Activated B cell treated with CpG ODN at 0.5 μM for 24 hours (primary cell): ENCODE measurements at regions of chr19 and their contacts with region 1.

Region 1: GRCh38 chr19:4791170-4792018 is at the start of gene FEM1A:
- DNase-seq: peak; percentile 97
- ATAC-seq: peak; percentile 95
- H3K4me3 Mint-ChIP-seq: peak within 1 kb of the TSS; percentile 79
- H3K27ac Mint-ChIP-seq: peak within 1 kb of the TSS; percentile 82
- H3K4me1 Mint-ChIP-seq: peaks cover 33% of the 10 kb centered on the region
- H3K27me3 Mint-ChIP-seq: peaks cover 2% of the 10 kb centered on the region
- CTCF ChIP-seq: peak; percentile 84
- total RNA-seq, gene FEM1A: 16.7 and 17.9 TPM in 2 replicates

Region 2: GRCh38 chr19:4400135-4400936 is 391.1 kb before region 1 on chr19 and contains the start of gene SH3GL1:
- CTCF ChIA-PET with region 1: no interaction called
- POLR2A ChIA-PET with region 1: no interaction called
- intact Hi-C with region 1: loop called (anchors 1 kb)
- DNase-seq: peak; percentile 95
- ATAC-seq: peak; percentile 65
- H3K4me3 Mint-ChIP-seq: peak within 1 kb of the TSS; percentile 88
- H3K27ac Mint-ChIP-seq: peak within 1 kb of the TSS; percentile 91
- H3K4me1 Mint-ChIP-seq: peaks cover 59% of the 10 kb centered on the region
- H3K27me3 Mint-ChIP-seq: no peaks in the 10 kb centered on the region
- CTCF ChIP-seq: peak; percentile 58
- total RNA-seq, gene SH3GL1: 33.8 and 43.7 TPM in 2 replicates

Region 3: GRCh38 chr19:4638828-4639530 is 152.4 kb before region 1 on chr19 and contains the start of gene TNFAIP8L1:
- CTCF ChIA-PET with region 1: no interaction called
- POLR2A ChIA-PET with region 1: no interaction called
- intact Hi-C with region 1: loop called (anchors 1 kb)
- DNase-seq: peak; percentile 99
- ATAC-seq: peak; percentile 92
- H3K4me3 Mint-ChIP-seq: peak within 1 kb of the TSS; percentile 99
- H3K27ac Mint-ChIP-seq: peak within 1 kb of the TSS; percentile 97
- H3K4me1 Mint-ChIP-seq: peaks cover 44% of the 10 kb centered on the region
- H3K27me3 Mint-ChIP-seq: no peaks in the 10 kb centered on the region
- CTCF ChIP-seq: no peak
- total RNA-seq, gene TNFAIP8L1: 13.2 and 15.5 TPM in 2 replicates

Region 4: DNA sequence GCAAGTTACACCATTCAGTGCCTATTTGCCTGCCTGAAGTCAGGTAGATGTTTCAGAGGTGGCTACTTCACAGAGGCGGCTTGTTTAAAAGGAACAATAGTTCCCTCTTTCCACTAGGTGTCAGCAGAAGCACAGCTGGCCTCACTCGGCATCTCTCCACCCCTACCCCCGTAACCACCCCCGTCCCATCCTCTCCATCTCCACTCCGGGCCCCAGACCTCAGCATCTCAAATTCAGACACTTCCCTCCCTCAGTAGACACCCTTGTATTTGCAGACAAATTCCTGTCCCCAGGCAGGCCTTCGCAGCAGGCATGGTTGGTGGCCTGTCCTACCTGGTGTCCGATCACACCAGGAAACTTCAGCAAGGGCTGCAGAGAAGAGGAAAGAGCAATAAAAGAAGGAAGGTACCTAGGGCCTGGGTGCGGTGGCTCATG is 58.7 kb before region 1 on chr19:
- CTCF ChIA-PET with region 1: interaction called, 50 read pairs
- POLR2A ChIA-PET with region 1: interaction called, 27 read pairs
- intact Hi-C with region 1: loop called (anchors 1 kb)
- DNase-seq: peak; percentile 29
- ATAC-seq: peak; percentile 97
- H3K4me3 Mint-ChIP-seq: peak overlapping the region; percentile 36
- H3K27ac Mint-ChIP-seq: no peak overlapping the region
- H3K4me1 Mint-ChIP-seq: peaks cover 4% of the 10 kb centered on the region
- H3K27me3 Mint-ChIP-seq: peaks cover 3% of the 10 kb centered on the region
- CTCF ChIP-seq: no peak

Region 5: GRCh38 chr19:4775592-4776152 is 15.7 kb before region 1 on chr19:
- CTCF ChIA-PET with region 1: no interaction called
- POLR2A ChIA-PET with region 1: no interaction called
- intact Hi-C with region 1: no loop called
- DNase-seq: no peak
- ATAC-seq: no peak
- H3K4me3 Mint-ChIP-seq: no peak overlapping the region
- H3K27ac Mint-ChIP-seq: no peak overlapping the region
- H3K4me1 Mint-ChIP-seq: peaks cover 6% of the 10 kb centered on the region
- H3K27me3 Mint-ChIP-seq: peaks cover 32% of the 10 kb centered on the region
- CTCF ChIP-seq: no peak

Region 6: DNA sequence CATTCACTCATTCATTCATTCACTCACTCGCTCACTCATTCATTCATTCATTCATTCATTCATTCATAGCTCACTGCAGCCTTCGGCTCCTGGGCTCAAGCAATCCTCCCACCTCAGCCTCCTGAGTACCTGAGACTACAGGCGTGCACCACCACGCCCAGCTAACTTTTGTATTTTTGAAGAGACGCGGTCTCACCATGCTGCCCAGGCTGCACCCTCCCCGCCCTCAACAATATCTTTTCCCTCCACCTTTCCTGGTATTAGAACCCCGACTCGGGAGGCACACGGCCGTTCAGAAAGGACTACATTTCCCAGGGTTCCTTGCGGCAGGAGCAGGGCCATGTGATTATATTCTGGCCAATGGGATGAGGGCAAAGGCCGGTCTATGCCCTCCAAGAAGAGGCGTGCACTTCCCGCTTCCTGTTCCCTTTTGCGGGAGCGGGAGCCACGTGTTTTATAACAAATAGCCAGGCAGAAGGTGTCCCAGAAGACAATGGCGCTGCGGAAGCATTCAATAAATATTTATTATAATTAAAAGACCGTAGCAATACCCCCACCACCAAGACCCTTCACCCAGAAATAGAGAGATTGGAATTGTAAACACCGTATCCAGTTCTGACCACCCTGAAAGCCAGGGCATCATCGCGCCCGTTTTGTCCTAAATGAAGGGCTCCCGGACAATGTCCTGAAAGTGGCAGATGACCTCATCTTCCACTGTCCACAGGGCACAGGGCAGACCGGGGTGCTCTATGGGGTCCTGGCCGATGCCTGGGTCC is 24.2 kb after region 1 on chr19:
- CTCF ChIA-PET with region 1: no interaction called
- POLR2A ChIA-PET with region 1: interaction called, 3 read pairs
- intact Hi-C with region 1: loop called (anchors 1 kb)
- DNase-seq: peak; percentile 39
- ATAC-seq: peak; percentile 72
- H3K4me3 Mint-ChIP-seq: peak overlapping the region; percentile 70
- H3K27ac Mint-ChIP-seq: peak overlapping the region; percentile 72
- H3K4me1 Mint-ChIP-seq: peaks cover 34% of the 10 kb centered on the region
- H3K27me3 Mint-ChIP-seq: no peaks in the 10 kb centered on the region
- CTCF ChIP-seq: no peak

Region 7: GRCh38 chr19:4968462-4969291 is 177.3 kb after region 1 on chr19 and contains the start of gene KDM4B:
- CTCF ChIA-PET with region 1: interaction called, 5 read pairs
- POLR2A ChIA-PET with region 1: interaction called, 10 read pairs
- intact Hi-C with region 1: loop called (anchors 1 kb)
- DNase-seq: peak; percentile 99
- ATAC-seq: peak; percentile 89
- H3K4me3 Mint-ChIP-seq: peak within 1 kb of the TSS; percentile 88
- H3K27ac Mint-ChIP-seq: peak within 1 kb of the TSS; percentile 88
- H3K4me1 Mint-ChIP-seq: peaks cover 31% of the 10 kb centered on the region
- H3K27me3 Mint-ChIP-seq: no peaks in the 10 kb centered on the region
- CTCF ChIP-seq: no peak
- total RNA-seq, gene KDM4B: 76.4 and 88.9 TPM in 2 replicates

Region 8: GRCh38 chr19:5790573-5791520 is 999.5 kb after region 1 on chr19 and contains the start of gene DUS3L:
- CTCF ChIA-PET with region 1: no interaction called
- POLR2A ChIA-PET with region 1: no interaction called
- intact Hi-C with region 1: loop called (anchors 5 kb)
- DNase-seq: peak; percentile 89
- ATAC-seq: peak; percentile 93
- H3K4me3 Mint-ChIP-seq: peak within 1 kb of the TSS; percentile 97
- H3K27ac Mint-ChIP-seq: peak within 1 kb of the TSS; percentile 100
- H3K4me1 Mint-ChIP-seq: peaks cover 15% of the 10 kb centered on the region
- H3K27me3 Mint-ChIP-seq: peaks cover 3% of the 10 kb centered on the region
- CTCF ChIP-seq: no peak
- total RNA-seq, gene DUS3L: 82.8 and 89.1 TPM in 2 replicates